Heart left ventricle (tissue), 16 donors: ENCODE measurements at regions of chr2 and their contacts with region 1.

Region 1: GRCh38 chr2:43455731-43456642 is 139.9 kb downstream of the THADA start:
- DNase-seq: no peak
- ATAC-seq: peak in 1 of 4 donors; percentile 28
- H3K4me3 ChIP-seq: no peak overlapping the region
- H3K27ac ChIP-seq: no peak overlapping the region
- H3K4me1 ChIP-seq: peaks cover 0 to 83% (median 24%) of the 10 kb centered on the region in 12 donors
- H3K27me3 ChIP-seq: no peaks in the 10 kb centered on the region
- CTCF ChIP-seq: no peak
- POLR2A ChIP-seq: no peak

Region 2: DNA sequence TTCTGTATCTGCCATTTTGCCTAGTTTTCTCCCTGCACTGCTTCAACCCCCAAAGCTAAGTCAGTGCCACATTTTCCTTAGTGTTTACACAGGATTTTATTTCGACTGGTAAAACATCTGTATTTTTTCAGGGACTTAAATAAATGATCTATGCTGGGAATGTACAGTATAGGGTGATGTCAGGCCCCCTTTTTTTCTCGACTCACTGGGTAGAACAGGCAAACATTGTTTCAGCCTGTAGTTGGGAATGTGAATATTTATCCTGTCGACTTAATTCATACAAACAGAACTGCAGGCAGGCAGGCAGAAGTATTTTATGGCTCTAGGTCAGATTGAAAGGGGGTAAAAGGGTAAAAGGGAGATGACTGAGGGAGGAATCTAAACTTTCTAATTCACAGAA is 106.1 kb before region 1 on chr2:
- intact Hi-C with region 1: loop called in 2 of 10 experiments (anchors 10 kb)
- DNase-seq: no peak
- ATAC-seq: no peak
- H3K4me3 ChIP-seq: no peak overlapping the region
- H3K27ac ChIP-seq: peak overlapping the region in 8 of 12 donors; percentile 13 to 87 (median 43)
- H3K4me1 ChIP-seq: peaks cover 4 to 64% (median 45%) of the 10 kb centered on the region in 12 donors
- H3K27me3 ChIP-seq: no peaks in the 10 kb centered on the region
- CTCF ChIP-seq: no peak
- POLR2A ChIP-seq: no peak

Region 3: DNA sequence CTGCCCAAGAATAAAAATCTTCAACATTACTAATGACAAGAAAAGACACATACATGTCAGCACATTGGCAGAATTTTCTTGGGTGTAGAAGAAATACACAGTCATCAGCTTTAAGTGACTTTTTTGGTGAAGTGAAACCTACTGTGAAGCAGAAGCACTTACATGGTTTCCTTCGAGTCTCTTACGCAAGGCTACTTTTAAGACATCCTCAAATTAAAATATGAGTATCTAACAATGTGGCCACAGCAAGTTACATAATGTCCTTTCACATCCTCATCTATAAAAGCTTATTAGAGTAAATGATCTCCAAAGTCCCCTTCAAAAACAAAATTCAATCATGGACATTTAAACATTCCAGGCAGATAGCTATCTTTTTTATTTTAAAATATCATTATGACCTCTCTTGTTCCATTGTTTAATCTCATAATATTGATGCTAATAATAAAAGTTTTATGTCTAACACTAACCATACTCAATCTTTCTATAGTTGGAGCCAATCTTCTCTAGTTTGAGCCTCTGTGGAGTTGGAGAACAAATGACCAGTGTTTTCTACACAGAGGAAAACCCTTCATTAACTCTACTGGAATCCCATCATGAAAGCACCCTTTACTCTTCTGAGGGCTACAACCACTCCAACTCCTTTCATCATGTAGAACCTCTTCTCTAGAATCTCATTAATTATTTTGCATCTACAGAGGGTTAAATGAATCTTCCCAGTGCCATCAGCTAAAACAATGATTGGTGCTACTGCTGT is 47.4 kb before region 1 on chr2:
- intact Hi-C with region 1: loop called in 1 of 10 experiments (anchors 5 kb)
- DNase-seq: no peak
- ATAC-seq: peak in 3 of 4 donors; percentile 17 to 62 (median 57)
- H3K4me3 ChIP-seq: no peak overlapping the region
- H3K27ac ChIP-seq: peak overlapping the region in 3 of 12 donors; percentile 16 to 73 (median 27)
- H3K4me1 ChIP-seq: peaks cover 0 to 52% (median 29%) of the 10 kb centered on the region in 12 donors
- H3K27me3 ChIP-seq: no peaks in the 10 kb centered on the region
- CTCF ChIP-seq: no peak
- POLR2A ChIP-seq: no peak

Region 4: GRCh38 chr2:43417300-43417699 is 38.7 kb before region 1 on chr2:
- intact Hi-C with region 1: loop called in 2 of 10 experiments (anchors 5 kb)
- DNase-seq: no peak
- ATAC-seq: no peak
- H3K4me3 ChIP-seq: no peak overlapping the region
- H3K27ac ChIP-seq: peak overlapping the region in 2 of 12 donors; percentile 33 to 46
- H3K4me1 ChIP-seq: peaks cover 0 to 70% (median 48%) of the 10 kb centered on the region in 12 donors
- H3K27me3 ChIP-seq: no peaks in the 10 kb centered on the region
- CTCF ChIP-seq: no peak
- POLR2A ChIP-seq: no peak